GM12878 (cell line): ENCODE measurements at regions of chr3 and their contacts with region 1.

Region 1: GRCh38 chr3:148379763-148380382 is 317.8 kb upstream of the AGTR1 start:
- DNase-seq: no peak
- ATAC-seq: peak; percentile 99
- H3K4me3 ChIP-seq: no peak overlapping the region
- H3K27ac ChIP-seq: no peak overlapping the region
- H3K4me1 ChIP-seq: no peaks in the 10 kb centered on the region
- H3K27me3 ChIP-seq: no peaks in the 10 kb centered on the region
- CTCF ChIP-seq: peak in 2 of 3 experiments; percentile 20 to 55; a peak in 3 of 6 replicates
- EP300 ChIP-seq: no peak
- POLR2A ChIP-seq: no peak
- RAD21 ChIP-seq: peak; percentile 57

Region 2: DNA sequence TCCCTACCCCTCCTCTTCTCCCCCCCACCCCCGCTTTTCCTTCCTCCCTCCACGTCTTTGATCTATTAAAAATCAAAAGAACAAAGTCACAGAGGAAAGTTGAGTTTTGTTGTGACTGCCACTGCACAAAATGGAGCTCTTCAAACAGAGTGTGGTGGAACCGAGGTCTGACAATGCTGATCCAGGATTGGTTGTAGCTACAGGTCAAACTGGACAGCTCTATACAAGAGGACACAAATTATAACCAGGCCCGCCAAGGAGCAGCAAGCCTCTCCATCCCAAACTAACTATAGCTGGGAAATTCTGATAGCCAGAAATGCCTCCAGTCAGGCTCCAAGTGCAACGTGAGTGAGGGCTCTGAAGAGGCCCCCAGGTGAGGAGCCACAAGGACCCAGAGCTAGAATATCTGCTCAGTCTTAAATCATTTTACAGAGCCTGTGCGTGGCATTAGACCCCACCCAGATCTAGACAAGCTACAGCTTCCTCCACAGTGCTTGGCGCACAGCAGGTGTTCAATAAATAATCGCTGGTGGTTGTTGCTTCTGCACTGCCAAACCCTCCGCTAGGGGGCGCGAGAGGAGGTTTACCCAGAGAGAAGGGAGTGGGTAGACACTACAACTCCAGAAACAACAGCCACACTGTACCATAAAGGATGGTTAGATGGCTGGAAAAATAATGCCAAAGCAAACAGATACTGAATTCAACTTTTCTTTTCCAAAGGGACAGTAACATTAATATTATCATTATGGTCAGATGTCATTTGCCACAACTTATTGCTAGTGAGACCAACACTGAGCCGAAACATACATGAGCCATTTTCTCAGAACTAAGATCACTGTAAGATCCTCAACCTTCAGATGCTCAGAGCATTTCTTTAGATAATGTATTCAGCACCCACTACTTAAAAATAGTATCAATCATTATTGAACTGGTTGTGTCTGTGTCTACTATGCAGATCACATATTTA is 1018.1 kb before region 1 on chr3:
- CTCF ChIA-PET with region 1: no interaction called
- POLR2A ChIA-PET with region 1: no interaction called
- RAD21 ChIA-PET with region 1: no interaction called
- SMC1A ChIA-PET with region 1: no interaction called
- in situ Hi-C with region 1: no loop called
- intact Hi-C with region 1: loop called (anchors 10 kb)
- DNase-seq: no peak
- ATAC-seq: peak; percentile 94
- H3K4me3 ChIP-seq: no peak overlapping the region
- H3K27ac ChIP-seq: no peak overlapping the region
- H3K4me1 ChIP-seq: no peaks in the 10 kb centered on the region
- H3K27me3 ChIP-seq: peaks cover 5 to 26% of the 10 kb centered on the region in 2 experiments
- CTCF ChIP-seq: peak; percentile 61 to 66 (median 64)
- EP300 ChIP-seq: no peak
- POLR2A ChIP-seq: no peak
- RAD21 ChIP-seq: peak; percentile 41; the same call in 1 of the 2 replicates

Region 3: GRCh38 chr3:147977001-147977400 is 402.9 kb before region 1 on chr3:
- CTCF ChIA-PET with region 1: no interaction called
- POLR2A ChIA-PET with region 1: no interaction called
- RAD21 ChIA-PET with region 1: no interaction called
- SMC1A ChIA-PET with region 1: no interaction called
- in situ Hi-C with region 1: no loop called
- intact Hi-C with region 1: no loop called
- DNase-seq: no peak
- ATAC-seq: no peak
- H3K4me3 ChIP-seq: no peak overlapping the region
- H3K27ac ChIP-seq: no peak overlapping the region
- H3K4me1 ChIP-seq: no peaks in the 10 kb centered on the region
- H3K27me3 ChIP-seq: no peaks in the 10 kb centered on the region
- CTCF ChIP-seq: no peak
- EP300 ChIP-seq: no peak
- POLR2A ChIP-seq: no peak
- RAD21 ChIP-seq: no peak

Region 4: GRCh38 chr3:148400754-148401153 is 20.9 kb after region 1 on chr3:
- CTCF ChIA-PET with region 1: interaction called, 14 read pairs
- POLR2A ChIA-PET with region 1: no interaction called
- RAD21 ChIA-PET with region 1: no interaction called
- SMC1A ChIA-PET with region 1: interaction called, 7 read pairs
- in situ Hi-C with region 1: no loop called
- intact Hi-C with region 1: no loop called
- DNase-seq: no peak
- ATAC-seq: no peak
- H3K4me3 ChIP-seq: no peak overlapping the region
- H3K27ac ChIP-seq: no peak overlapping the region
- H3K4me1 ChIP-seq: no peaks in the 10 kb centered on the region
- H3K27me3 ChIP-seq: no peaks in the 10 kb centered on the region; a peak in 1 of 4 replicates
- CTCF ChIP-seq: no peak
- EP300 ChIP-seq: no peak
- POLR2A ChIP-seq: no peak
- RAD21 ChIP-seq: no peak

Region 5: DNA sequence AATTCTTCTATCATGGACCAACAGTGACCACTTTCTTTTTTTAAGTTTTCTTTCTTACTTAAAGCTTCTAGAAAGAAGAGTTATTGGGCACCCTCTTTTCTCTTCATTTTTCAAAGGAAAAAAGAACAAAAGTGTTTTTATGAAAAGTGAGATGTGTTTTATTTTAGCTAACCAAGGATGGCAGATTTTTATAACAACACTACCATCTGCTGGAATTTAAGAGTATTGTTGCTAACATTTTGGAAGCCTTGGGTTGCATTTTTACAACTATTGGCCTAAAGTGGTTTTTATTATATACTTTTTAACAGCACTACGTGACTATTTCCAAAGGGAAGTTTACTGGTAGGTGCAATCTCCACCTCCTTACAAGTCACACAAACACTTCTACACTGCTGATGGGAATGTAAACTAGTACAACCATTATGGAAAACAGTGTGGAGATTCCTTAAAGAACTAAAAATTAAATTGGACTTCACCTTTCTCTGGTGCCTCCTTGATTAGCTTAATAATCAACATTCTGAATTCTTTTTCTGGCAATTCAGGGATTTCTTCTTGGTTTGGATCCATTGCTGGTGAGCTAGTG is 80.1 kb after region 1 on chr3:
- CTCF ChIA-PET with region 1: interaction called, 17 read pairs
- POLR2A ChIA-PET with region 1: no interaction called
- RAD21 ChIA-PET with region 1: interaction called, 4 read pairs
- SMC1A ChIA-PET with region 1: interaction called, 8 read pairs
- in situ Hi-C with region 1: no loop called
- intact Hi-C with region 1: loop called (anchors 5 kb)
- DNase-seq: no peak
- ATAC-seq: no peak
- H3K4me3 ChIP-seq: no peak overlapping the region
- H3K27ac ChIP-seq: no peak overlapping the region
- H3K4me1 ChIP-seq: no peaks in the 10 kb centered on the region
- H3K27me3 ChIP-seq: no peaks in the 10 kb centered on the region
- CTCF ChIP-seq: peak; percentile 5 to 46 (median 37); a peak in 4 of 6 replicates
- EP300 ChIP-seq: no peak
- POLR2A ChIP-seq: no peak
- RAD21 ChIP-seq: peak; percentile 62

Region 6: GRCh38 chr3:148861277-148861869 is 481.5 kb after region 1 on chr3:
- CTCF ChIA-PET with region 1: interaction called, 6 read pairs
- POLR2A ChIA-PET with region 1: no interaction called
- RAD21 ChIA-PET with region 1: no interaction called
- SMC1A ChIA-PET with region 1: interaction called, 4 read pairs
- in situ Hi-C with region 1: no loop called
- intact Hi-C with region 1: loop called (anchors 10 kb)
- DNase-seq: no peak
- ATAC-seq: peak; percentile 80
- H3K4me3 ChIP-seq: no peak overlapping the region
- H3K27ac ChIP-seq: no peak overlapping the region
- H3K4me1 ChIP-seq: no peaks in the 10 kb centered on the region
- H3K27me3 ChIP-seq: peaks cover 0 to 8% of the 10 kb centered on the region in 2 experiments; a peak in 1 of 4 replicates
- CTCF ChIP-seq: peak; percentile 45 to 65 (median 46); a peak in 5 of 6 replicates
- EP300 ChIP-seq: no peak
- POLR2A ChIP-seq: no peak
- RAD21 ChIP-seq: peak; percentile 71